Esophagus squamous epithelium (tissue), 5 donors: ENCODE measurements at regions of chr9 and their contacts with region 1.

Region 1: DNA sequence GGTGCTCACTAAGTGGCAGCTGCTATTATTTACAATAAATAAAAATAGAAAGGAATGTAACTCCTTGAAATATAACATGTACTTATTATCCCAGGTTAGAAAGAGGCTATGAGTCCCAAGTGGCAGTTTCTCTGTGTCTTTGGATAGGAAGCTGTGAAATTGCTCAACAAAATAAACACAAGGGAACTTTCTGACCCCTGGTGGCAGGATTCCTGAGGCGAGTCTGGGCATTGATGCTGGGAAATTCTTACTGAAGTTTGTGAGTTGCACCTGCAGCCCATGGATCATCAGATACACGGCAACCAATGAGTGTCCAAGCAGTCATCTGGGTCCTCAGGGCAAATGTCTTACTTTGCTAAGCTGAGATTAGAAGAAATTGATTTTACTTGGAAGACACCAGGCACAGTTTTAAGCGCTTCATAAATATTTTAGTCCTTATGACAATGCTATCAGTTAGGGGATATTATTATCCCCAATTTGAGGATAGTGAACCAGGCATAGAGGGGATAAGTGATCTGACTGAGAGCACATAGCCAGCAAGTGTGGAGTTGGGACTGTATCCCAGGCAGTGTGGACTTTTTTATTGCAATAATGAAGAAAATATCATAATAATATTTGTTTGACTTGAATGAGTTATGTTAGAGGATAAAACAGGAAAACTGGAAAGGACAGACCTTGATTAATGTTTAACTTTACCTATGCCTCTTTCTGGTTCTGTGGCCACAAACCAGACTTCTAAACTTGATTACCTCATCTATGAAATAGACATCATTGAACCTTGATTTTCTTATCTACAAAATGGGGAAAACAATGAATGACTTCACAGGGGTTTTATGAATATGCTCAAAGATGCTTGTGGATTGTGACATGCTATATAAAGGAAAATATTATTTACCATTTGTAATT is 265.5 kb upstream of the ADAMTSL1 start:
- DNase-seq: no peak
- H3K4me3 ChIP-seq: no peak overlapping the region
- H3K27ac ChIP-seq: no peak overlapping the region
- H3K4me1 ChIP-seq: no peaks in the 10 kb centered on the region
- H3K27me3 ChIP-seq: no peaks in the 10 kb centered on the region
- CTCF ChIP-seq: peak in 5 of 6 experiments; percentile 39 to 63 (median 53)
- POLR2A ChIP-seq: no peak

Region 2: DNA sequence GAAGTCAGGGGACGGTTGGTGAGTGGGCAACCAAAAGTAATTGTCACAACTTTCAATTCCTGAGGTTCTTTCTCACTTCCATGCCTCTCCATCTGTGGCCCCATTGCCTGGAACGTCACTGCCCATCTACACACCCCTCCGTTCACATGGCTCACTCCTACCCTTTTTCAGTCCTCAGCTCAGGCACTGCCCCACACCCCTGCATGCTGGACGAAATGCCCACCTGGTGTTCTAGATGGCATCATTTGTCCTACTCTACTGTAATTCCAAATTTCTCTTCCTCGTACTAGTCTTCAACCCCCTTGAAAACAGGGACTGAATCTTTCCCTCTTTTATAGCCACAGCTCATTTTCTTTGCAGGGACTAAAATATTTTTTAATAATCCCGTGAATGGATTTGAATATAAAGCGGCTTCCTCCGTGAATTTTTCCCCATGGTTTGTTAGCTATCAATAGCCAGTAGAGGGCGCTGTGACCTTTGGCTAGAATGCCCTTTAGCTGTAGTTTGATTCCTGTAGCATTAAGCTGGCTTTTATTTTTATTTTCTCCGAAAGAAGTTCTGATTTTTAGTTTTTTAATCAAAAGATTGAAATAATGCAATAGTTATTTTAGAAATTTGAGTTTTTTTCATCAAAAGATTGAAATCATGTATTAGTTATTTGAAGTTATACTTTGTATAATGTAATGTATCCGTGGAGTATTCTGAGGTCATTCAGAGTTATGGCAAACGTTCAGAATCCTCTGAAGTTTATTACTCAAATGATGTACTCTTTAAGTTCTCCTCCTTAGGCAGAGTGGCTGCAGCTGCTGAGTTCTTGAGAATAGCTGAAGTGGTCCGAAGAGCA is 397.5 kb before region 1 on chr9:
- intact Hi-C with region 1: loop called (anchors 5 kb)
- DNase-seq: no peak
- H3K4me3 ChIP-seq: no peak overlapping the region
- H3K27ac ChIP-seq: no peak overlapping the region
- H3K4me1 ChIP-seq: peaks cover 0 to 5% (median 0%) of the 10 kb centered on the region in 3 donors
- H3K27me3 ChIP-seq: peaks cover 0 to 14% (median 0%) of the 10 kb centered on the region in 4 donors
- CTCF ChIP-seq: peak; percentile 58 to 83 (median 79)
- POLR2A ChIP-seq: no peak

Region 3: DNA sequence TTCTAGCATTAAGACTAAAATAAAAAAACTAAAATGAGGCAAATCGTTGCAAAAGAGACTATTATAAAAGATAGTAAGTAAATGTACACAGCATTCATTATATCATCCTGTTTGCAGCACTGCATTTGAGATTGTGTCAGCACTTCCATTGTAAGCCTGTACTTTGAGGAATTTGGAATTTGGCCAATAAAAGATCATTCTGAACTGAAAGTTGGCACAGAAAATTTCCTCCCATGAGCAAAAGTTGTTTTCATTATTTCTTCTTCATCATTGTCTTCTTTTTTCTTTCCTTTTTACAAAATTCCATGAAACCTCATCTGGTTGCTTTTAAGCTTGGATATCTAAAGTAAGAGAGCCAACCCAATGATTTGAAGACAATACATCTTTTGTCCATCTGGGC is 66.3 kb after region 1 on chr9:
- intact Hi-C with region 1: no loop called
- DNase-seq: no peak
- H3K4me3 ChIP-seq: no peak overlapping the region
- H3K27ac ChIP-seq: peak overlapping the region in 2 of 4 donors; percentile 52 to 64
- H3K4me1 ChIP-seq: peaks cover 0 to 23% (median 0%) of the 10 kb centered on the region in 3 donors
- H3K27me3 ChIP-seq: no peaks in the 10 kb centered on the region
- CTCF ChIP-seq: no peak
- POLR2A ChIP-seq: no peak

Region 4: DNA sequence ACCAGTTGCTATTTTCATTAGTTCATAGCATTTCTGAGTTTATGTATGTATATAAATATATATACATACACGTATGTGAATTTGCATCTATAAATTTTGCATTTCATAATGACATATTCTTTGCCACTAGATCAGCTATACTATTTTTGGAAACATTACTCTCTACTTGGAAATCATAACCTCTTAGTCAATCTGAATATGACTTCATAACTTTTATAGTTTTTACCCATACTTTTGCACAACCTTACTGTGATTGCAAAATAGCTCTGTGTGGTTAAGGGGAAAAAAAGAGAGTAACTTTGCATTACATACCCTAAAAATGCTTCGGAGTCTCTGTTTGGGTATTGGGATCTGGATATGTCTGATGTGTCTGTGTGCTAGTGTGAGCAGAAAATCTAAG is 220.7 kb after region 1 on chr9:
- intact Hi-C with region 1: no loop called
- DNase-seq: no peak
- H3K4me3 ChIP-seq: no peak overlapping the region
- H3K27ac ChIP-seq: no peak overlapping the region
- H3K4me1 ChIP-seq: peaks cover 0 to 7% (median 3%) of the 10 kb centered on the region in 3 donors
- H3K27me3 ChIP-seq: no peaks in the 10 kb centered on the region
- CTCF ChIP-seq: no peak
- POLR2A ChIP-seq: no peak